Mammary epithelial cell (primary cell): ENCODE measurements at regions of chr6 and their contacts with region 1.

Region 1: GRCh38 chr6:33771146-33772081 is 17.5 kb downstream of the LEMD2 start:
- DNase-seq: peak; percentile 51
- H3K4me3 ChIP-seq: no peak overlapping the region
- H3K27ac ChIP-seq: no peak overlapping the region
- H3K4me1 ChIP-seq: peaks cover 29% of the 10 kb centered on the region
- H3K27me3 ChIP-seq: no peaks in the 10 kb centered on the region
- CTCF ChIP-seq: peak; percentile 58 to 89

Region 2: GRCh38 chr6:33711140-33712129 is 60.0 kb before region 1 on chr6 and contains the start of gene UQCC2:
- CTCF ChIA-PET with region 1: no interaction called
- dilution Hi-C with region 1: loop called (anchors 10 kb)
- in situ Hi-C with region 1: loop called in 1 of 2 experiments (anchors 10 kb)
- intact Hi-C with region 1: no loop called
- DNase-seq: peak; percentile 93
- H3K4me3 ChIP-seq: peak within 1 kb of the TSS; percentile 81 to 97 (median 84)
- H3K27ac ChIP-seq: peak within 1 kb of the TSS; percentile 91
- H3K4me1 ChIP-seq: peaks cover 23% of the 10 kb centered on the region
- H3K27me3 ChIP-seq: no peaks in the 10 kb centered on the region
- CTCF ChIP-seq: peak; percentile 63 to 88
- total RNA-seq, gene UQCC2: 12.3 to 65.2 TPM

Region 3: GRCh38 chr6:33840048-33840926 is 68.9 kb after region 1 on chr6:
- CTCF ChIA-PET with region 1: interaction called, 3 read pairs
- dilution Hi-C with region 1: no loop called
- in situ Hi-C with region 1: no loop called
- intact Hi-C with region 1: loop called (anchors 5 kb)
- DNase-seq: peak; percentile 97
- H3K4me3 ChIP-seq: no peak overlapping the region
- H3K27ac ChIP-seq: peak overlapping the region; percentile 80
- H3K4me1 ChIP-seq: peaks cover 44% of the 10 kb centered on the region
- H3K27me3 ChIP-seq: no peaks in the 10 kb centered on the region
- CTCF ChIP-seq: no peak

Region 4: DNA sequence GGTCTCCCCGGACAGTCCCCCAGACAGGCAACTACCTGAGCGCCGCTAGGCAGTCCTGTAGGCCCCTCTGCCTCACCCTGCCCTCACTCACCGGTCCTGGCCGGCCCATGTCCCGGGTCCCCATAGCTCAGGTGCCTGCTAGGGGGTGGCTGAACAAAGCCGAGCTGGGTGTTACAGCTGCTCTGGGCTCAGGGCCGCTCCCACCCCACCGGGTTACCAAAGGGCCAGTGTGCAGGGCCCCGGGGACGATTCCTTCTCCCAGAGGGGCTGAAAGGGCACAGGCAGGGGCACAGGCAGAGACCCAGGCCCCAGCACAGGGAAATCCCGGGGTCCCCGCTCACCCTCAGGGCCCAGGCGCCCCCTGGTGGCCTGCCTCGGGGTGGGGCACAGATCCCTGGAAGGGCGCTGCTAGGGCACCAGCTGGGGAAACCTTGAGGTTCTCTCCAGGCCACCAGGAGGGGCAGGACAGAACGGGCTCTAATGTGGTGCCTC is 256.1 kb after region 1 on chr6:
- CTCF ChIA-PET with region 1: no interaction called
- dilution Hi-C with region 1: no loop called
- in situ Hi-C with region 1: loop called (anchors 5 to 10 kb)
- intact Hi-C with region 1: loop called (anchors 1 kb)
- DNase-seq: peak; percentile 11
- H3K4me3 ChIP-seq: no peak overlapping the region
- H3K27ac ChIP-seq: no peak overlapping the region
- H3K4me1 ChIP-seq: no peaks in the 10 kb centered on the region
- H3K27me3 ChIP-seq: no peaks in the 10 kb centered on the region
- CTCF ChIP-seq: peak; percentile 58 to 85

Region 5: GRCh38 chr6:34106900-34107573 is 335.6 kb after region 1 on chr6:
- CTCF ChIA-PET with region 1: interaction called, 21 read pairs
- dilution Hi-C with region 1: no loop called
- in situ Hi-C with region 1: no loop called
- intact Hi-C with region 1: no loop called
- DNase-seq: no peak
- H3K4me3 ChIP-seq: no peak overlapping the region
- H3K27ac ChIP-seq: no peak overlapping the region
- H3K4me1 ChIP-seq: no peaks in the 10 kb centered on the region
- H3K27me3 ChIP-seq: peaks cover 4% of the 10 kb centered on the region
- CTCF ChIP-seq: no peak